CD4-positive, alpha-beta memory T cell (primary cell): ENCODE measurements at regions of chr3 and their contacts with region 1.

Region 1: GRCh38 chr3:182792901-182793662 is at the start of gene ATP11B:
- DNase-seq: peak; percentile 76 to 86 (median 80)
- H3K4me3 ChIP-seq: peak within 1 kb of the TSS; percentile 97 to 98
- H3K4me3 Mint-ChIP-seq: peak within 1 kb of the TSS; percentile 99 to 100 (median 100)
- H3K27ac ChIP-seq: peak within 1 kb of the TSS; percentile 95
- H3K27ac Mint-ChIP-seq: peak within 1 kb of the TSS; percentile 99 to 100 (median 100)
- H3K4me1 ChIP-seq: peaks cover 25% of the 10 kb centered on the region
- H3K4me1 Mint-ChIP-seq: peaks cover 23 to 49% (median 27%) of the 10 kb centered on the region in 4 donors
- H3K27me3 ChIP-seq: no peaks in the 10 kb centered on the region
- H3K27me3 Mint-ChIP-seq: peaks cover 1 to 3% of the 10 kb centered on the region in 2 donors
- total RNA-seq, gene ATP11B: 119 to 130 TPM

Region 2: GRCh38 chr3:180912304-180913296 is 1880.5 kb before region 1 on chr3 and contains the start of gene FXR1:
- CTCF ChIA-PET with region 1: no interaction called
- POLR2A ChIA-PET with region 1: interaction called, 9 read pairs
- intact Hi-C with region 1: loop called (anchors 2 kb)
- DNase-seq: peak; percentile 89 to 91 (median 90)
- H3K4me3 ChIP-seq: peak within 1 kb of the TSS; percentile 77 to 98
- H3K4me3 Mint-ChIP-seq: peak within 1 kb of the TSS; percentile 91 to 97 (median 96)
- H3K27ac ChIP-seq: peak within 1 kb of the TSS; percentile 98
- H3K27ac Mint-ChIP-seq: peak within 1 kb of the TSS; percentile 95 to 99 (median 98)
- H3K4me1 ChIP-seq: peaks cover 51% of the 10 kb centered on the region
- H3K4me1 Mint-ChIP-seq: peaks cover 38 to 69% (median 55%) of the 10 kb centered on the region in 4 donors
- H3K27me3 ChIP-seq: no peaks in the 10 kb centered on the region
- H3K27me3 Mint-ChIP-seq: no peaks in the 10 kb centered on the region
- total RNA-seq, gene FXR1: 131 TPM

Region 3: GRCh38 chr3:182766099-182766498 is 27.0 kb before region 1 on chr3:
- CTCF ChIA-PET with region 1: no interaction called
- POLR2A ChIA-PET with region 1: no interaction called
- intact Hi-C with region 1: no loop called
- DNase-seq: no peak
- H3K4me3 ChIP-seq: no peak overlapping the region
- H3K4me3 Mint-ChIP-seq: no peak overlapping the region
- H3K27ac ChIP-seq: no peak overlapping the region
- H3K27ac Mint-ChIP-seq: peak overlapping the region in 1 of 7 donors; percentile 22
- H3K4me1 ChIP-seq: no peaks in the 10 kb centered on the region
- H3K4me1 Mint-ChIP-seq: no peaks in the 10 kb centered on the region
- H3K27me3 ChIP-seq: no peaks in the 10 kb centered on the region
- H3K27me3 Mint-ChIP-seq: peaks cover 1 to 12% of the 10 kb centered on the region in 2 donors

Region 4: GRCh38 chr3:182824957-182825356 is 31.9 kb after region 1 on chr3:
- CTCF ChIA-PET with region 1: no interaction called
- POLR2A ChIA-PET with region 1: interaction called, 15 read pairs
- intact Hi-C with region 1: no loop called
- DNase-seq: no peak
- H3K4me3 ChIP-seq: no peak overlapping the region
- H3K4me3 Mint-ChIP-seq: peak overlapping the region in 1 of 8 donors; percentile 8
- H3K27ac ChIP-seq: no peak overlapping the region
- H3K27ac Mint-ChIP-seq: peak overlapping the region in 3 of 7 donors; percentile 8 to 58 (median 29)
- H3K4me1 ChIP-seq: peaks cover 8% of the 10 kb centered on the region
- H3K4me1 Mint-ChIP-seq: peaks cover 23 to 50% (median 31%) of the 10 kb centered on the region in 4 donors
- H3K27me3 ChIP-seq: no peaks in the 10 kb centered on the region
- H3K27me3 Mint-ChIP-seq: no peaks in the 10 kb centered on the region

Region 5: DNA sequence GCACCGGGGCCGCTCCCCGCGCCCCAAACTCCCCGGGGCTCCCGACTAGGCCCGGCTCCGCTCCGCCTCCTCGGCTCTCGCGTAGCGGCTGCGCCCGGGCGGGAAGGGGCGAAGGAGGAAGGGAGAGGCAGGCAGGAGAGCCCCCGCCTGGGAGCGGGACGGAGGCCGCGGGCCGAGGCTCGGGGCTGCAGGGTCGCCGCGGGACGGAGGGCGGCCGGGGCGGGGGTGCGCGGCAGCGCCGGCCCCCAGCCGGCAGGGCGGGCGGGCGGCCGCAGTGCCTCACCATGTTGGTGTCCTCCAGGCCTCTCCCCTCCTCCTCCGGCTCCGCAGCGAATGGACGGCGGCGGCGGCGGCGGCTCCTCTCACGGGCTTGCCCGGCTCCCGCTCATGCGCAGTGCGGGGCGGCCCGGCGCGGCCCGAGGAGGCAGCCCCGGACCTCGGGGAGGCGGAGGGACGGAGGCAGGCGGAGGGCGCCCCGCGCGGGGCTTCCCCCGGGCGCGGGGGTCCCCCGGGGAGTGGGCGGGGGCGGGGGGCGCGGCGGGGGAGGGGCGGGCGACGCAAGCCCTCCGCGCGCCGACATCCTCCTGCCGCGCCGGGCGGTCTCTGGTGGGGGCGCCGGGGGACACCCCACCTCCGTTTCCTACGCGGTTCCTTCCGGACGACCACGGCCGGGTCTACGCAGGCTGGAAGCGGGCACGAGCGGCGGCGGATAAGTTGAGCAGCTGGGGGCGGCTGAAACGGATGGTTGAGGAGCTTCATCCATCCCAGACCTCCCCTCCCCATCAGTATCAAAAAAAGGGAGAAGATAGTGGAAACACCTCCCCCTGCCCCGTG is 187.3 kb after region 1 on chr3 and contains the start of gene DCUN1D1:
- CTCF ChIA-PET with region 1: interaction called, 3 read pairs
- POLR2A ChIA-PET with region 1: interaction called, 3 read pairs
- intact Hi-C with region 1: loop called (anchors 2 kb)
- DNase-seq: peak; percentile 87 to 90 (median 89)
- H3K4me3 ChIP-seq: peak within 1 kb of the TSS; percentile 66 to 79
- H3K4me3 Mint-ChIP-seq: peak within 1 kb of the TSS; percentile 89 to 95 (median 92)
- H3K27ac ChIP-seq: peak within 1 kb of the TSS; percentile 75
- H3K27ac Mint-ChIP-seq: peak within 1 kb of the TSS; percentile 83 to 96 (median 88)
- H3K4me1 ChIP-seq: peaks cover 32% of the 10 kb centered on the region
- H3K4me1 Mint-ChIP-seq: peaks cover 24 to 43% (median 34%) of the 10 kb centered on the region in 4 donors
- H3K27me3 ChIP-seq: no peaks in the 10 kb centered on the region
- H3K27me3 Mint-ChIP-seq: no peaks in the 10 kb centered on the region
- total RNA-seq, gene DCUN1D1: 34.4 to 36.4 TPM

Region 6: DNA sequence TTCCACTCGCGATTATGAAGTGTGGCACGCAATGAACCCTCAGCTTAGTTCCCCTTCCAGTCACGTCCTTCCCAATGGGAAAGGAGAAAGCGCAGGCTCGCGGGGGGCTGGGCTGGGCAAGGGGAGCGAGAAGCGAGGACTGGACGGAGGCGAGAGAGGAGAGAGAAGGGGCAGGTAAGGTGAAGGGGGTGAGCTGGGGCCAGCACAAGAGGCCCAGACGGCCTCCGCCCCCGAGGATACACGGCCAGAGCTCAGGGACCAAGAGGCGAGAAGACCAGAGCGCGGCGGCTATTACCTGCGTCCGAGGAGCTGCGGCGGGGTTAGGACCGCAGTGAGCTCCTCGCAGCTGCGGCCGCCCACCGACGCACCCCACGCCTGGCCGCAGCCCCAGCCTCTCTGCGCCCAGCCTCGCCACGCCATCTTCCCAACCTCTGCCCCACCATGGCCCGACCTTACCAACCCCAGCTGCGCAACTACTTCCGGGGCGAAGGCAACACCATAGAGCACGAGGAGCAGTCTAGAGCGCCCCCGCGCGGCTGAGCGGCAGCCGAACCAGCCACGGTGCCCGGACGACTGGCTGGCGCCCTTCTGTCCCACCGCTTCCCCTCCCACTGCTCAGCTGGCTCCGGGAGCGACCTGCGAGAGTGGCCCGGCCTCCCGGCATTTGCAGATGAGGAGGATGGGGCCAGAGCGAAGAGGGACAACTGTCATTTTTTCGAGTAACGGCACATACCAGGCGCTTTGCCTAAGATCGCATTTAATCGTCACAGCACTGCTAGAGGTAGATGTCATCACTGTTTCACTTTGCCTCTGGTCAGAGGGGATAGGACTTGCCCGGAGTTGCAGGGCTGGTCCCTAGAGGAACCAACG is 1091.6 kb after region 1 on chr3 and contains the start of gene PARL:
- CTCF ChIA-PET with region 1: interaction called, 3 read pairs
- POLR2A ChIA-PET with region 1: no interaction called
- intact Hi-C with region 1: loop called (anchors 10 kb)
- DNase-seq: peak; percentile 93 to 95 (median 94)
- H3K4me3 ChIP-seq: peak within 1 kb of the TSS; percentile 85 to 95
- H3K4me3 Mint-ChIP-seq: peak within 1 kb of the TSS; percentile 92 to 98 (median 95)
- H3K27ac ChIP-seq: peak within 1 kb of the TSS; percentile 74
- H3K27ac Mint-ChIP-seq: peak within 1 kb of the TSS; percentile 88 to 96 (median 93)
- H3K4me1 ChIP-seq: peaks cover 28% of the 10 kb centered on the region
- H3K4me1 Mint-ChIP-seq: peaks cover 24 to 50% (median 34%) of the 10 kb centered on the region in 4 donors
- H3K27me3 ChIP-seq: no peaks in the 10 kb centered on the region
- H3K27me3 Mint-ChIP-seq: no peaks in the 10 kb centered on the region
- total RNA-seq, gene PARL: 46.9 to 50.2 TPM